OCI-LY7 (cell line): ENCODE measurements at regions of chr17 and their contacts with region 1.

Region 1: GRCh38 chr17:78716814-78717393 is 65.2 kb downstream of the CYTH1 start:
- DNase-seq: peak; percentile 67
- H3K4me3 ChIP-seq: peak overlapping the region; percentile 62
- H3K27ac ChIP-seq: peak overlapping the region; percentile 88
- H3K4me1 ChIP-seq: peaks cover 98% of the 10 kb centered on the region
- CTCF ChIP-seq: no peak

Region 2: GRCh38 chr17:78774956-78775571 is 58.2 kb after region 1 on chr17:
- CTCF ChIA-PET with region 1: no interaction called
- POLR2A ChIA-PET with region 1: interaction called, 6 read pairs
- intact Hi-C with region 1: loop called (anchors 2 kb)
- DNase-seq: peak; percentile 60
- H3K4me3 ChIP-seq: peak overlapping the region; percentile 67
- H3K27ac ChIP-seq: peak overlapping the region; percentile 82
- H3K4me1 ChIP-seq: peaks cover 65% of the 10 kb centered on the region
- CTCF ChIP-seq: no peak

Region 3: GRCh38 chr17:78781948-78782916 is 65.3 kb after region 1 on chr17 and contains the start of gene CYTH1:
- CTCF ChIA-PET with region 1: no interaction called
- POLR2A ChIA-PET with region 1: interaction called, 4 read pairs
- intact Hi-C with region 1: loop called (anchors 2 kb)
- DNase-seq: peak; percentile 94
- H3K4me3 ChIP-seq: peak within 1 kb of the TSS; percentile 91
- H3K27ac ChIP-seq: peak within 1 kb of the TSS; percentile 85
- H3K4me1 ChIP-seq: peaks cover 37% of the 10 kb centered on the region
- CTCF ChIP-seq: no peak
- total RNA-seq, gene CYTH1: 73.0 and 88.1 TPM in 2 replicates

Region 4: DNA sequence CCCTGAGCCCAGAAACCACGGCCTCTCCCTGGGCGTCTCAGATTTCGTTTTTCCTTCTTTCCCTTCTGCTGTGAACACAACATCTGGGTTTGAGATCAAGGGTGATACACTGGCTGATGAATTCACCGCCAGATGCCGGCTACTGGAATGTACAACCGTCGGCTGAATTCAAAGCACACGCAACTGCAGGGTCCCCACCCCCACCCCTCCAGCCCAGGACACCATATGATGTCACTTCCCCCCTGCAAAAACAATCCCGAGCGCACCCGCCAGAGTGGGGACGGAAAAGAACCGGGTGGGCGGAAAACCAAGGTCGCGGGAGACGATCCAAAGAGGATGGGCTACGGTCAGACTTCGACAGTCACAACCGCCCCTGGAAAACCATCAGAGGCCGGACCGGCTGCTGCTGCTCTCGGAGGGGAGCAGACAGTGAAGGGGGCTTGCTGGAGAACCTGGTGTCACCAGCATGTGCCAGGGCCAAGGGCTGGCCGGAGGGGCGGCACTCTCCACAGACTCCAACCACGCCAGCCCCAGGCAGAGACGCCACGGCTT is 162.8 kb after region 1 on chr17:
- CTCF ChIA-PET with region 1: no interaction called
- POLR2A ChIA-PET with region 1: no interaction called
- intact Hi-C with region 1: no loop called
- DNase-seq: no peak
- H3K4me3 ChIP-seq: no peak overlapping the region
- H3K27ac ChIP-seq: no peak overlapping the region
- H3K4me1 ChIP-seq: no peaks in the 10 kb centered on the region
- CTCF ChIP-seq: no peak